A673 (cell line): ENCODE measurements at regions of chr3 and their contacts with region 1.

Region 1: DNA sequence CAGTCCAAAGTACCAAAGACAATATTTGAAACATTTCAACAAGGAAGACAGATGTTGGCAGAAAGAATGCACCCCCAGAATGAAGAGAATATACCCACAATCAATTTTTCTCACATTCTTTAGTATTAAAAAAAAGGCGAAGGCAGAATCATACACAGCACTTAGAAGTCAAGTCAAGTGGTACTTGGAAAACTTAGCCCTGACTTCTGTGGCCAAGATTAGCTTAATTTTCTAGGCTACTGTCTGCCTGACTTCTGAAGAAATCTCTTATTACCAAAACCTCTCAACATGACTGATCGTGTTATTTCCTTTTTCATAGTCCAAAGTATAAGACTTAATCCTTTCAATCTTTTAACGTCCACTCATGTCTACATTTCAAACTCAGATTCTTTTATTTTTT is 60.7 kb downstream of the PBRM1 start:
- DNase-seq: no peak
- H3K4me3 ChIP-seq: no peak overlapping the region
- H3K27ac ChIP-seq: no peak overlapping the region
- H3K4me1 ChIP-seq: no peaks in the 10 kb centered on the region
- H3K27me3 ChIP-seq: no peaks in the 10 kb centered on the region
- CTCF ChIP-seq: no peak

Region 2: DNA sequence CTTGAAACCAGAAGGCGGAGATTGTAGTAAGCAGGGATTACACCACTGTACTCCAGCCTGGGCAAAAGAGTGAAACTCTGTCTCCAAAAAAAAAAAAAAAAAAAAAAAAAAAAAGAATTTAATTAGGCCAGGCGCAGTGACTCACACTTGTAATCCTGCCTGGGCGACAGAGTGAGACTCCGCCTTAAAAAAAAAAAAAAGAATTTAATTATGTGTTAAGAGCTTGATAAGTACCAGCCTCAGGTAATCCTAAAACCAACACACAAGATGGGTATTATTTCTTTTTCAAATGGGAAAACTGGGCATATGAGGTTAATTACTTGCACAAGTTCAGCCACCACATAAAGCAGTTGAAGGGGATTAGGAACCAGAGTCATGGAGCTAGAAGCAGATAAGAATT is 11.6 kb after region 1 on chr3:
- CTCF ChIA-PET with region 1: no interaction called
- POLR2A ChIA-PET with region 1: no interaction called
- intact Hi-C with region 1: loop called (anchors 1 kb)
- DNase-seq: peak; percentile 67
- H3K4me3 ChIP-seq: no peak overlapping the region
- H3K27ac ChIP-seq: no peak overlapping the region
- H3K4me1 ChIP-seq: no peaks in the 10 kb centered on the region
- H3K27me3 ChIP-seq: no peaks in the 10 kb centered on the region
- CTCF ChIP-seq: no peak

Region 3: GRCh38 chr3:53180305-53181023 is 555.4 kb after region 1 on chr3:
- CTCF ChIA-PET with region 1: no interaction called
- POLR2A ChIA-PET with region 1: no interaction called
- intact Hi-C with region 1: no loop called
- DNase-seq: no peak
- H3K4me3 ChIP-seq: no peak overlapping the region
- H3K27ac ChIP-seq: no peak overlapping the region
- H3K4me1 ChIP-seq: no peaks in the 10 kb centered on the region
- H3K27me3 ChIP-seq: no peaks in the 10 kb centered on the region
- CTCF ChIP-seq: no peak